ENCODE measurements at regions of chr13 and their contacts with region 1.

Region 1: GRCh38 chr13:36431654-36432511 is at the start of gene CCNA1:
- DNase-seq: peak; percentile 54
- ATAC-seq: peak; percentile 73
- H3K4me3 Mint-ChIP-seq: peak within 1 kb of the TSS; percentile 24
- H3K27ac Mint-ChIP-seq: no peak within 1 kb of the TSS
- H3K4me1 Mint-ChIP-seq: peaks cover 8% of the 10 kb centered on the region
- H3K27me3 Mint-ChIP-seq: peaks cover 51% of the 10 kb centered on the region
- total RNA-seq, gene CCNA1: 0.21 to 0.40 TPM

Region 2: GRCh38 chr13:35475960-35476943 is 955.6 kb before region 1 on chr13 and contains the start of gene MAB21L1:
- CTCF ChIA-PET with region 1: no interaction called
- POLR2A ChIA-PET with region 1: no interaction called
- intact Hi-C with region 1: loop called in 1 of 2 experiments (anchors 5 kb)
- DNase-seq: peak; percentile 20
- ATAC-seq: no peak
- H3K4me3 Mint-ChIP-seq: peak within 1 kb of the TSS; percentile 68
- H3K27ac Mint-ChIP-seq: no peak within 1 kb of the TSS
- H3K4me1 Mint-ChIP-seq: peaks cover 31% of the 10 kb centered on the region
- H3K27me3 Mint-ChIP-seq: peaks cover 69% of the 10 kb centered on the region
- total RNA-seq, gene MAB21L1: not detected

Region 3: DNA sequence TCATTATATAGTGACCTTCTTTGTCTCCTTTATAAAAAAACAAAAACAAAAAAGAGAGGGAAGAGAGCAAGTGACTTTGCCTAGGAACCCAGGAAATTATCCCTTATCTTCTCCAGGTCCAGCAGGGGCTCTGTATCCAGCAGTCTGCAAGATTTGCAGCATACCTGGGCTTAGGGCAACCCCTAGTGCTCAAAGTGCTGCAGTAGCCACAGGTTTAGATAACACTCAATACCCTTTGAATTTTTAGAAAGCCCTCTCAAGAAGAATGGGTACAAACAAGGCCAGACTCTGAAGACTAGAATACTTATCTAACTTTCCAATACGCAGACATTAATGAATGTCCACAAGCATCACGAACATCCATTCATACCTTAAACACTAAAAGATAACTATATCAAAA is 43.6 kb after region 1 on chr13:
- CTCF ChIA-PET with region 1: no interaction called
- POLR2A ChIA-PET with region 1: no interaction called
- intact Hi-C with region 1: no loop called
- DNase-seq: peak; percentile 12
- ATAC-seq: no peak
- H3K4me3 Mint-ChIP-seq: no peak overlapping the region
- H3K27ac Mint-ChIP-seq: no peak overlapping the region
- H3K4me1 Mint-ChIP-seq: no peaks in the 10 kb centered on the region
- H3K27me3 Mint-ChIP-seq: peaks cover 12% of the 10 kb centered on the region

Measured in activated CD4-positive, alpha-beta T cell treated with anti-CD3 and anti-CD28 coated beads for 36 hours (primary cell).